Activated CD4-positive, alpha-beta T cell treated with anti-CD3 and anti-CD28 coated beads for 36 hours (primary cell): ENCODE measurements at regions of chr13 and their contacts with region 1.

Region 1: DNA sequence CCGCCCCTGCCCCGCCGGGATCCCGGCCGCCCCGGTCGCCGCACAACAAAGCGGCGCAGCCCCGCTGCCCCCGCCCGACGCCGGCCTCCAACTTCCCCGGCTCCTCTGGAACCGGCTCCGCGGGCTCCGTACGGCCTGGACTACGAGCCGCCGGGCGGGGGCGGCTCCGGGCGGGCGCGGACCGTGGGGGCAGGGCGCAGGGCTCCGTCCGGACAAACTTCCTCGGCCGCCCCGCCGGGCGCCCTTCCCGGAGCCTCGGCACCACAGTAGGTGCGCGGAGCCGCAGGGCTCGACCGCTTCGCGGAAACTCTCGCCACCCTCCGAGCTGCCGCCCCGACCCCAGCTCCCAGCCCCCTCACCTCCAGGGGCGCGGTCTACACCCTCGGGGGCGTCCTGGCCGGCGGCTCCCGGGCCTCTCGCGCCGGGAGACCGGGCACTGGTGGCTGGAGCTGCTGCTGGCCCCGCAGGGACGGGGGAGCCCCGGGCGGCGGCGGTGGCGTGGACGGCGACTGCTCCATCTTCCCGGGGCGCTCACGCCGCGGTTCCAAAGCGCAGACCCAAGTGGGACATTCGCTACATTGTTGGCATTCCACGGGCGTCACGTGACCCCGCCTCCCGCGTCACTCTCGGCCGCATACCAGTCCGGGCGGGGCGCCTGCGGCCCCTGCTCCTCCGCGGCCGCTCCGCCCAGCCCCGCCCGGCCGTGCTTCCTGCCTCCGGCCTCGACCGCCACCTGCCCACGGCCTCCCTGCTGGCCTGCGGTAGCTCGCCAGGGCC is at the start of gene LATS2:
- DNase-seq: peak; percentile 76
- ATAC-seq: peak; percentile 75
- H3K4me3 Mint-ChIP-seq: peak within 1 kb of the TSS; percentile 75
- H3K27ac Mint-ChIP-seq: no peak within 1 kb of the TSS
- H3K4me1 Mint-ChIP-seq: peaks cover 2% of the 10 kb centered on the region
- H3K27me3 Mint-ChIP-seq: peaks cover 19% of the 10 kb centered on the region
- total RNA-seq, gene LATS2: 1.6 TPM

Region 2: GRCh38 chr13:20945952-20946383 is 115.2 kb before region 1 on chr13:
- CTCF ChIA-PET with region 1: no interaction called
- POLR2A ChIA-PET with region 1: no interaction called
- intact Hi-C with region 1: loop called in 1 of 2 experiments (anchors 10 kb)
- DNase-seq: peak; percentile 14
- ATAC-seq: no peak
- H3K4me3 Mint-ChIP-seq: no peak overlapping the region
- H3K27ac Mint-ChIP-seq: no peak overlapping the region
- H3K4me1 Mint-ChIP-seq: peaks cover 8% of the 10 kb centered on the region
- H3K27me3 Mint-ChIP-seq: peaks cover 41% of the 10 kb centered on the region

Region 3: GRCh38 chr13:21014502-21015170 is 46.5 kb before region 1 on chr13:
- CTCF ChIA-PET with region 1: interaction called, 3 read pairs
- POLR2A ChIA-PET with region 1: no interaction called
- intact Hi-C with region 1: loop called in 1 of 2 experiments (anchors 2 kb)
- DNase-seq: no peak
- ATAC-seq: no peak
- H3K4me3 Mint-ChIP-seq: no peak overlapping the region
- H3K27ac Mint-ChIP-seq: no peak overlapping the region
- H3K4me1 Mint-ChIP-seq: peaks cover 28% of the 10 kb centered on the region
- H3K27me3 Mint-ChIP-seq: no peaks in the 10 kb centered on the region

Region 4: GRCh38 chr13:21043898-21044297 is 17.3 kb before region 1 on chr13:
- CTCF ChIA-PET with region 1: no interaction called
- POLR2A ChIA-PET with region 1: no interaction called
- intact Hi-C with region 1: no loop called
- DNase-seq: no peak
- ATAC-seq: no peak
- H3K4me3 Mint-ChIP-seq: no peak overlapping the region
- H3K27ac Mint-ChIP-seq: no peak overlapping the region
- H3K4me1 Mint-ChIP-seq: peaks cover 6% of the 10 kb centered on the region
- H3K27me3 Mint-ChIP-seq: peaks cover 2% of the 10 kb centered on the region

Region 5: DNA sequence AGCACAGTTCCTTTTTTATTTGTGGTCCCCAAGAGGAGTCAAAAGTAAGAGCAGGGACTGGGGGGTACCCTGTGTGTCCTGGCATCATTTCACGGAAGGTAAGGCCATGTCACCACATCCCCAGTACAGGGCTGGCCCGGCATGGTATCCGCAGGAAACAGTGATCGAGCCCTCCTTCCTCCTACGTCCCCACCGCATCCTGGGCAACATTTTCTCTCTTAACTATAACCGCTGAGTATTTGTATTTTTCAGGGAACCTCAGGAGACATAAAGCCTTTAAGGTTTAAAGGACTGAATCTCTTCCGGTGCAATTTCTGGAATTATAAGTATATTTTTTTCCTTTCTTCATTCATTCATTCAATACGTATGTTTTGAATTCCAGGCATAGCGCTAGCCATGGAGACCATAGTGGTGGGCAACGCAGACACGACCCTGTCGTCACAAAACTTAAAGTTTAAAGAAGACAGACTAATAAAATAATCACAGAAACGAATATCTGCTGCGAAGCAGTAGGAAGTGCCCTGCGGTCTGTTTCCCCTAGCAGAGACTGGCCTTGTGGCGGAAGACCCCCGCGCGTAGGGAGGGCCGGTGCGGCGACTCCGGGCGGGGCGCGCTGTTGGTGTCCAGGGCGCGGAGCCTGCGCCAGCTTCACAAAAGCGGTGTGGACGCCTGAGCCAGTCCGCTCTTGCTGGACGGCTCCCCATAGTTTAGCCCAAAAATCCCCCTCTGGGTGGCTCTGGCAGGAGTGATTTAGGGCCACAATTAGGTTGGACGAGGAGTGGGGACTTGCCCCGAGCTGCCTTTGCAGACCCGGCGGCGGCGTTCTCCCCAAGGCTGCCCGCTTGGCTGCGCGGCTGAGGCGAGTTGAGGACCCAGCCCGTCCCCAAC is 14.1 kb after region 1 on chr13:
- CTCF ChIA-PET with region 1: interaction called, 3 read pairs
- POLR2A ChIA-PET with region 1: no interaction called
- intact Hi-C with region 1: loop called in 1 of 2 experiments (anchors 1 kb)
- DNase-seq: peak; percentile 65
- ATAC-seq: peak; percentile 81
- H3K4me3 Mint-ChIP-seq: peak overlapping the region; percentile 61
- H3K27ac Mint-ChIP-seq: peak overlapping the region; percentile 14
- H3K4me1 Mint-ChIP-seq: peaks cover 13% of the 10 kb centered on the region
- H3K27me3 Mint-ChIP-seq: peaks cover 9% of the 10 kb centered on the region

Region 6: DNA sequence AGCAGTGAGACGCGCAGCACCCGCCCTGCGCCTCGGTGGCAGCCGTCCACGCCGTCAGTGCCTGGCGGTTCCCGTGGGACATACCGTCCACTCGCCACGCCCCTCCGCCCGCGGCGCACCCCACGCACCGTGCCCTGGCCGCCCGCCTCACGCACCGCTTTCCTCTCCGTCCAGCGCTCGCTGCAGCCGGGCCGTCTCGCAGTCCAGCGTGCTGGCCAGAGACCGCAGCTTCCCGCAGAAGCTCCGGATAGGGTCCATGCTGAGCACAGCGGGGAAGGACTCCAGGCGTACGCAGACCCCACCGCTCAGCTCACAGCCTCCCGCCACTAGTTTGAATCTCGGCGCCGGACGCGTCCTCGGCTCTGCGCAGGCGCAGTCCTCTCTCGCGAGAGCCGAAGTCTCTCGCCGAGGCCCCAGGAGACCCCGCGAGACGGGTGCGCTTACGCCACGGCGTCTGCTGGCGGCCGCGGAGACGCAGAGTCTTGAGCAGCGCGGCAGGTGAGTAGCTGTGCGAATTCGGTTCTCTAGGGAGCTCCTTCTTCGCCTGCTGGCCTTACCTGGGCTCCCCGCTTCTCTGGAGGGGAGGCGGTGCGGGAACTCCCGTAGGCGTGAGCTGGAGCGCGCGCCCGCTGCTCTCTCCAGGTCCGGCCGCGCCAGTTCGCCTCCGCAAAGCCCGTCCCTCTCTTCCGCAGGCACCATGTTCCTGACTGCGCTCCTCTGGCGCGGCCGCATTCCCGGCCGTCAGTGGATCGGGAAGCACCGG is 115.2 kb after region 1 on chr13 and contains the starts of genes MRPL57 and SKA3:
- CTCF ChIA-PET with region 1: no interaction called
- POLR2A ChIA-PET with region 1: no interaction called
- intact Hi-C with region 1: no loop called
- DNase-seq: peak; percentile 96
- ATAC-seq: peak; percentile 96
- H3K4me3 Mint-ChIP-seq: peak within 1 kb of the TSS; percentile 98
- H3K27ac Mint-ChIP-seq: peak within 1 kb of the TSS; percentile 97
- H3K4me1 Mint-ChIP-seq: peaks cover 20% of the 10 kb centered on the region
- H3K27me3 Mint-ChIP-seq: no peaks in the 10 kb centered on the region
- total RNA-seq, gene MRPL57: 18.6 to 23.0 TPM
- total RNA-seq, gene SKA3: 40.7 to 53.7 TPM